CD8-positive, alpha-beta T cell (primary cell): ENCODE measurements at regions of chr17 and their contacts with region 1.

Region 1: GRCh38 chr17:42153919-42154742 is 658 bp downstream of the RAB5C start:
- DNase-seq: peak in 2 of 9 experiments; percentile 20 to 40
- ATAC-seq: no peak
- H3K4me3 ChIP-seq: peak overlapping the region; percentile 94 to 95
- H3K4me3 Mint-ChIP-seq: peak overlapping the region; percentile 98
- H3K27ac ChIP-seq: peak overlapping the region; percentile 78 to 87
- H3K27ac Mint-ChIP-seq: peak overlapping the region; percentile 95
- H3K4me1 ChIP-seq: peaks cover 24% of the 10 kb centered on the region
- H3K4me1 Mint-ChIP-seq: peaks cover 39% of the 10 kb centered on the region
- H3K27me3 ChIP-seq: no peaks in the 10 kb centered on the region
- H3K27me3 Mint-ChIP-seq: no peaks in the 10 kb centered on the region
- CTCF ChIP-seq: no peak

Region 2: GRCh38 chr17:41918314-41919164 is 235.6 kb before region 1 on chr17 and contains the start of gene ACLY:
- CTCF ChIA-PET with region 1: no interaction called
- POLR2A ChIA-PET with region 1: no interaction called
- intact Hi-C with region 1: loop called (anchors 1 kb)
- DNase-seq: peak; percentile 89 to 97 (median 95)
- ATAC-seq: peak; percentile 99
- H3K4me3 ChIP-seq: peak within 1 kb of the TSS; percentile 94 to 100
- H3K4me3 Mint-ChIP-seq: peak within 1 kb of the TSS; percentile 90
- H3K27ac ChIP-seq: peak within 1 kb of the TSS; percentile 82 to 86
- H3K27ac Mint-ChIP-seq: peak within 1 kb of the TSS; percentile 81
- H3K4me1 ChIP-seq: peaks cover 17% of the 10 kb centered on the region
- H3K4me1 Mint-ChIP-seq: peaks cover 32% of the 10 kb centered on the region
- H3K27me3 ChIP-seq: no peaks in the 10 kb centered on the region
- H3K27me3 Mint-ChIP-seq: no peaks in the 10 kb centered on the region
- CTCF ChIP-seq: no peak
- total RNA-seq, gene ACLY: 24.9 to 25.0 TPM

Region 3: GRCh38 chr17:41966463-41967140 is 187.5 kb before region 1 on chr17 and contains the start of gene CNP:
- CTCF ChIA-PET with region 1: interaction called, 3 read pairs
- POLR2A ChIA-PET with region 1: no interaction called
- intact Hi-C with region 1: loop called (anchors 1 kb)
- DNase-seq: peak; percentile 77 to 95 (median 92)
- ATAC-seq: peak; percentile 88
- H3K4me3 ChIP-seq: peak within 1 kb of the TSS; percentile 75 to 89
- H3K4me3 Mint-ChIP-seq: peak within 1 kb of the TSS; percentile 83
- H3K27ac ChIP-seq: peak within 1 kb of the TSS; percentile 75 to 79
- H3K27ac Mint-ChIP-seq: peak within 1 kb of the TSS; percentile 94
- H3K4me1 ChIP-seq: peaks cover 33% of the 10 kb centered on the region
- H3K4me1 Mint-ChIP-seq: peaks cover 44% of the 10 kb centered on the region
- H3K27me3 ChIP-seq: no peaks in the 10 kb centered on the region
- H3K27me3 Mint-ChIP-seq: no peaks in the 10 kb centered on the region
- CTCF ChIP-seq: no peak
- total RNA-seq, gene CNP: 16.7 to 18.8 TPM

Region 4: GRCh38 chr17:42120770-42121769 is 33.1 kb before region 1 on chr17 and contains the start of gene KAT2A:
- CTCF ChIA-PET with region 1: interaction called, 6 read pairs
- POLR2A ChIA-PET with region 1: interaction called, 3 read pairs
- intact Hi-C with region 1: loop called (anchors 1 kb)
- DNase-seq: peak; percentile 52 to 89 (median 75)
- ATAC-seq: peak; percentile 88
- H3K4me3 ChIP-seq: peak within 1 kb of the TSS; percentile 38 to 65
- H3K4me3 Mint-ChIP-seq: peak within 1 kb of the TSS; percentile 76
- H3K27ac ChIP-seq: no peak within 1 kb of the TSS
- H3K27ac Mint-ChIP-seq: no peak within 1 kb of the TSS
- H3K4me1 ChIP-seq: peaks cover 13% of the 10 kb centered on the region
- H3K4me1 Mint-ChIP-seq: peaks cover 22% of the 10 kb centered on the region
- H3K27me3 ChIP-seq: no peaks in the 10 kb centered on the region
- H3K27me3 Mint-ChIP-seq: no peaks in the 10 kb centered on the region
- CTCF ChIP-seq: no peak
- total RNA-seq, gene KAT2A: 39.3 to 42.5 TPM

Region 5: DNA sequence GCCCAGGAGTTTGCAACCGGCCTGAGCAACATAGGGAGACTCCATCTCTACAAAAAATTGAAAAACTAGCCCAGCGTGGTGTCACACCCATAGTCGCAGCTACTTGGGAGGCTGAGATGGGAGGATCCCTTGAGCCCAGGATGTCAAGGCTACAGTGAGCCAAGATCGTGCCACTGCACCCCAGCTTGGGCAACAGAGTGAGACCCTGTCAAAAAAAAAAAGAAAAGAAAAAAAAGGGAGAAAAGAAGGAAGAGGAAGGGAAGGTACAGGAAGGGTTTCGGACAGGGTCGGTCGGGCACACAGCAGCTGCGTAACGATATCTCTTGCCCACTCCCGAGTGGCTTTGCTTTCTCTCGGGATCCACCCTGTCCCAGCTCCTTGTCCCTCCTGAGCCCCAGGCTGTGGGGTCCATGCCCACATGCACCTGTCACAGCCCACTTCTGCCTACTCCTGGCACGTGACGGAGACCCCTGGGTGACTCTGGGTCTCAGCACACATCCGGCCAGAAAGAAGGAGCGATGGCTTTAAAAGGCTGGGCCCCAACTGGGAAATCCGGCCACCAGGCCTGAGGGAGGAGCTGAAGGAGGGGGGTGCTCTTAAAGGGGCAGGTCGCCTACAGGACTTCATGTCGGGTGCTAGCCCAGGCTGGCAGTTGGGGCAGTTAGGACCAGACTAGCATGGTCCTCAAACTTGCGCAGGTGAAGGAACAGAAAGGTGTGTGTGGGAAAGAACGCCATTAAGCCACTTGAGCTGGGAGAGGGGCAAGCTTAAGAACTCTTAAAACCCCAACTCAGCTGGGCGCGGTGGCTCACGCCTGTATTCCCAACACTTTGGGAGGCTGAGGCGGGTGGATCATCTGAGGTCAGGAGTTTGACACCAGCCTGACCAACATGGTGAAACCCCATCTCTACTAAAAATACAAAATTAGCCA is 40.1 kb after region 1 on chr17 and contains the start of gene GHDC:
- CTCF ChIA-PET with region 1: interaction called, 3 read pairs
- POLR2A ChIA-PET with region 1: no interaction called
- intact Hi-C with region 1: loop called (anchors 1 kb)
- DNase-seq: peak; percentile 50 to 86 (median 76)
- ATAC-seq: peak; percentile 98
- H3K4me3 ChIP-seq: peak within 1 kb of the TSS; percentile 79 to 93
- H3K4me3 Mint-ChIP-seq: peak within 1 kb of the TSS; percentile 95
- H3K27ac ChIP-seq: peak within 1 kb of the TSS; percentile 49 to 82
- H3K27ac Mint-ChIP-seq: peak within 1 kb of the TSS; percentile 88
- H3K4me1 ChIP-seq: peaks cover 22% of the 10 kb centered on the region
- H3K4me1 Mint-ChIP-seq: peaks cover 22% of the 10 kb centered on the region
- H3K27me3 ChIP-seq: no peaks in the 10 kb centered on the region
- H3K27me3 Mint-ChIP-seq: no peaks in the 10 kb centered on the region
- CTCF ChIP-seq: no peak
- total RNA-seq, gene GHDC: 6.6 to 6.7 TPM